ENCODE measurements at regions of chr17 and their contacts with region 1.

Region 1: GRCh38 chr17:9743096-9743495 is 48.3 kb downstream of the DHRS7C start:
- DNase-seq: no peak
- H3K4me3 ChIP-seq: no peak overlapping the region
- H3K27ac ChIP-seq: no peak overlapping the region
- H3K4me1 ChIP-seq: no peaks in the 10 kb centered on the region
- H3K27me3 ChIP-seq: no peaks in the 10 kb centered on the region
- CTCF ChIP-seq: no peak
- EP300 ChIP-seq: no peak
- POLR2A ChIP-seq: no peak

Region 2: GRCh38 chr17:9696266-9697027 is 46.6 kb before region 1 on chr17:
- intact Hi-C with region 1: loop called in 1 of 4 experiments (anchors 2 kb)
- DNase-seq: no peak
- H3K4me3 ChIP-seq: no peak overlapping the region
- H3K27ac ChIP-seq: no peak overlapping the region
- H3K4me1 ChIP-seq: no peaks in the 10 kb centered on the region
- H3K27me3 ChIP-seq: no peaks in the 10 kb centered on the region
- CTCF ChIP-seq: no peak
- EP300 ChIP-seq: no peak
- POLR2A ChIP-seq: no peak

Region 3: DNA sequence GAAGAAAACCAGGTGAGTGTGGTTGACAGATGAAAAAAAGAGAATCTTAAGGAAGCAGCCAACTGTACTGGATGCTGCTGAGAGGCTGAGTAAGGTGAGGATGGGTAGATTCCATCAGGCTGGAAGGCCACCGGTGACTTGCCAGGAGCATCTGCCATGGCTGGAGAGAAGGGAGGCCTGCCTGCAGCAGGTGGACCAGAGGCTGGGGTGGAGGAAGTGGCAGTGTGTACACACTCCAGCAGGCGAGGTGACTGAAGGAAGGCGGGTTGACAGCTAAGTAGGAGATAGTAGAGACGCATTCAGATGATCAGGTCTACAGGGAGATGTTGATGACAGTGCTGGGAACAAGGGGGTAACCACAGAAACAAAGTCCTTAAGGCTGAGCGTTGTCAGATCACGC is 28.3 kb before region 1 on chr17:
- intact Hi-C with region 1: no loop called
- DNase-seq: no peak
- H3K4me3 ChIP-seq: no peak overlapping the region
- H3K27ac ChIP-seq: no peak overlapping the region
- H3K4me1 ChIP-seq: no peaks in the 10 kb centered on the region
- H3K27me3 ChIP-seq: no peaks in the 10 kb centered on the region
- CTCF ChIP-seq: no peak
- EP300 ChIP-seq: no peak
- POLR2A ChIP-seq: no peak

Region 4: DNA sequence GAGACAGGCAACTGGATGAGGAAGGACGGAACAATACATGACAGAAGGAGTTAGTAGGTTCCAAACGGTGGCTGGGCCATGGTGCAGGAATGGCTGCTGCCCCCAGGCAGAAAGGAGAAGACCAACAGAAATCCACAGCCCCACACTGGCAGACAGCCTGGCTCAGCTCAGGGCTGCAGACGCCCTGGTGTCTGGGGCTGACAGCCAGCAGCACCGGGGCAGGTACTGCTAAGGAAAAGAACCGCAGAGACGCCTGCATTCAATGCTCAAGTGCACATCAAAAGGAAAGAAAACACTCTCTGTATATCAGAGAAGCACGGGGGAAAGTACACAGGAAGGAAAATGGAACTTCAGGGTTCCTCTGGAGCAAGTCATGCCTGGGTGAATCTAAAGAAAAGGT is 401.9 kb after region 1 on chr17:
- intact Hi-C with region 1: no loop called
- DNase-seq: no peak
- H3K4me3 ChIP-seq: no peak overlapping the region
- H3K27ac ChIP-seq: no peak overlapping the region
- H3K4me1 ChIP-seq: peaks cover 2% of the 10 kb centered on the region
- H3K27me3 ChIP-seq: no peaks in the 10 kb centered on the region
- CTCF ChIP-seq: no peak
- EP300 ChIP-seq: no peak
- POLR2A ChIP-seq: no peak

Measured in ovary (tissue), 10 donors.